Activated CD4-positive, alpha-beta T cell treated with anti-CD3 and anti-CD28 coated beads, Interleukin-2, amount 10 ng/mL, durations not matched to agents 24 days and 14 days (primary cell): ENCODE measurements at regions of chr2 and their contacts with region 1.

Region 1: DNA sequence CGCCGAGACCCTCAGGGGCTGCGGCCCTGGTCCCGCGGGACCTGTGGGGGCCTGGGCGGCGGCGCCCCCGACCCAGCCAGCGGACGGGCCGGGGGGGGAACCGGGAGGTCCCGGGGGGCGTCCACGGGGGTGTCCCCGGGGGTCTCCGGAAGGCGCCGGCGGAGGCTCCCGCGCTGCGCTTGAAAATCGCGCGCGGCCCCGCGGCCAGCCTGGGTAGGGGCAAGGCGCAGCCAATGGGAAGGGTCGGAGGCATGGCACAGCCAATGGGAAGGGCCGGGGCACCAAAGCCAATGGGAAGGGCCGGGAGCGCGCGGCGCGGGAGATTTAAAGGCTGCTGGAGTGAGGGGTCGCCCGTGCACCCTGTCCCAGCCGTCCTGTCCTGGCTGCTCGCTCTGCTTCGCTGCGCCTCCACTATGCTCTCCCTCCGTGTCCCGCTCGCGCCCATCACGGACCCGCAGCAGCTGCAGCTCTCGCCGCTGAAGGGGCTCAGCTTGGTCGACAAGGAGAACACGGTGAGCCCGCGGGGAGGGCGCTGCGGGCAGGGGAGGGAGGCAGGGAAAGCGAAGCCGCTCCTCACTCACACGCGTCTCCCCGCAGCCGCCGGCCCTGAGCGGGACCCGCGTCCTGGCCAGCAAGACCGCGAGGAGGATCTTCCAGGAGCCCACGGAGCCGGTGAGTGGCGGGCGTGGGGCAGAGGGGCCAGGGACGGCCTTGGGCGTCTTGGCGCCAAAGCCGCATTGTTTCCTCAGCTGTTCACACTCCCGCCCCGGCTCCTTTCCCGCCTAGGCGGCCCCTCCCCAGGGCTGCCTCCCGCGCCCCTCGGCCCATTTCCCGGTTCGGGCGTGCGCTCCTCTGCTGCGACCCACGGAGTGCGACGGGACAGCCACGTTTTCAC is at the start of gene RRM2:
- DNase-seq: peak; percentile 98
- H3K4me3 Mint-ChIP-seq: peak within 1 kb of the TSS; percentile 94
- H3K27ac Mint-ChIP-seq: peak within 1 kb of the TSS; percentile 97
- H3K4me1 Mint-ChIP-seq: peaks cover 54% of the 10 kb centered on the region
- H3K27me3 Mint-ChIP-seq: no peaks in the 10 kb centered on the region
- total RNA-seq, gene RRM2: 378 and 383 TPM in 2 replicates

Region 2: GRCh38 chr2:9656270-9656766 is 466.3 kb before region 1 on chr2:
- intact Hi-C with region 1: loop called (anchors 5 kb)
- DNase-seq: peak; percentile 88
- H3K4me3 Mint-ChIP-seq: peak overlapping the region; percentile 25
- H3K27ac Mint-ChIP-seq: peak overlapping the region; percentile 93
- H3K4me1 Mint-ChIP-seq: peaks cover 46% of the 10 kb centered on the region
- H3K27me3 Mint-ChIP-seq: peaks cover 16% of the 10 kb centered on the region

Region 3: GRCh38 chr2:10072656-10073480 is 49.8 kb before region 1 on chr2:
- intact Hi-C with region 1: loop called (anchors 1 kb)
- DNase-seq: peak; percentile 94
- H3K4me3 Mint-ChIP-seq: no peak overlapping the region
- H3K27ac Mint-ChIP-seq: peak overlapping the region; percentile 7
- H3K4me1 Mint-ChIP-seq: peaks cover 7% of the 10 kb centered on the region
- H3K27me3 Mint-ChIP-seq: peaks cover 45% of the 10 kb centered on the region

Region 4: DNA sequence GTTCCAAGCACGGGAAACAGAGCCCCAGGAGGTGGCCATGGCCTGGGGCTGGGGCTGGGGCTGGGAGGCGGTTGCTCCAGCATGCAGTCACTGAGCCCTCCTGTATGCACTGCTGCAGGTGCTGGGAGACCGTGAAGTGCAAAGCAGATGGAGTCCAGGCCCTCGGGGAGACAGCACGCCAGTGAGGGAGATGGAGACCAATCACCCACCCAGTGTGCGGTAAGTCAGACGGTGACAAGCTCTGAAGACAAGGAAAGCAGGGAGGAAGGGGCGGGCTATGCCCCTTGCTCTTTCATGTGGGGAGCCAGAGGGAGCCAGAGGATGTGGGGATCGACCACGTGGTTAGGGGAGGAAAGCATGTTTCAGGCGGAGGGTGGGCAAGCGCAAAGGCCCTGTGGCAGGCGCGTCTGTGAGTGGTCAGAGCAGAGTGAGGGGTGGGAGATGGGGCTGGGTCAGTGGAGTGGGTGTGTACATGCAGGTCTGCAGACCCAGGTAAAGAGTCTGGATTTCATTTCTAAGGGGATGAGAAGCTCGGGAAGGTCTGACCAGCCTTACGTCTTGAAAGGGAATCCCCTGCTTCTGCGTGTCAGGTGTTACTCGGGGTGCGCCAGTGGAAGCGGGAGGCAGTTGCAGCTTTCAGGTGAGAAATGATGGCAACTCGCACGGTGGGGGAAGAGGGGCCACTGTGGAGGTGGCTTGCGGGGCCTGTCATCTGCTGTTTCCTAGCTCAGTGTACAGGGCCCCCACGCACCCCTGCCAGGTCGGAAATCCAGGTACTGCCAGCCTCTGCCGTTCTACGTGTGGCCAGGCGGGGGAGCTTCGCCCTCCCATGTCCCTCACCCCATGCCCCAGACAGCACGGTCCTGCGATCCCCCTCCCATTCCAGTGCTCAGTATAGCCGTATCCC is 19.4 kb after region 1 on chr2:
- intact Hi-C with region 1: no loop called
- DNase-seq: peak; percentile 85
- H3K4me3 Mint-ChIP-seq: peak overlapping the region; percentile 65
- H3K27ac Mint-ChIP-seq: peak overlapping the region; percentile 78
- H3K4me1 Mint-ChIP-seq: peaks cover 34% of the 10 kb centered on the region
- H3K27me3 Mint-ChIP-seq: no peaks in the 10 kb centered on the region

Region 5: GRCh38 chr2:10302479-10303180 is 180.0 kb after region 1 on chr2 and contains the start of gene HPCAL1:
- intact Hi-C with region 1: loop called (anchors 1 kb)
- DNase-seq: peak; percentile 96
- H3K4me3 Mint-ChIP-seq: peak within 1 kb of the TSS; percentile 99
- H3K27ac Mint-ChIP-seq: peak within 1 kb of the TSS; percentile 87
- H3K4me1 Mint-ChIP-seq: peaks cover 64% of the 10 kb centered on the region
- H3K27me3 Mint-ChIP-seq: no peaks in the 10 kb centered on the region
- total RNA-seq, gene HPCAL1: 77.1 and 82.8 TPM in 2 replicates

Region 6: GRCh38 chr2:10408649-10409579 is 286.3 kb after region 1 on chr2:
- intact Hi-C with region 1: loop called (anchors 1 kb)
- DNase-seq: peak; percentile 95
- H3K4me3 Mint-ChIP-seq: peak overlapping the region; percentile 84
- H3K27ac Mint-ChIP-seq: peak overlapping the region; percentile 96
- H3K4me1 Mint-ChIP-seq: peaks cover 46% of the 10 kb centered on the region
- H3K27me3 Mint-ChIP-seq: no peaks in the 10 kb centered on the region

Region 7: GRCh38 chr2:10448208-10448645 is 325.6 kb after region 1 on chr2 and contains the start of gene ODC1:
- intact Hi-C with region 1: loop called (anchors 1 kb)
- DNase-seq: peak; percentile 98
- H3K4me3 Mint-ChIP-seq: peak within 1 kb of the TSS; percentile 90
- H3K27ac Mint-ChIP-seq: peak within 1 kb of the TSS; percentile 96
- H3K4me1 Mint-ChIP-seq: peaks cover 41% of the 10 kb centered on the region
- H3K27me3 Mint-ChIP-seq: no peaks in the 10 kb centered on the region
- total RNA-seq, gene ODC1: 267 and 273 TPM in 2 replicates